ENCODE measurements at regions of chr3 and their contacts with region 1.

Region 1: GRCh38 chr3:69425261-69425660 is 39.4 kb upstream of the FRMD4B start:
- DNase-seq: peak; percentile 46
- CTCF ChIP-seq: peak; percentile 68

Region 2: GRCh38 chr3:69324362-69325025 is 100.8 kb before region 1 on chr3:
- in situ Hi-C with region 1: loop called (anchors 10 kb)
- DNase-seq: no peak
- CTCF ChIP-seq: peak; percentile 65

Region 3: DNA sequence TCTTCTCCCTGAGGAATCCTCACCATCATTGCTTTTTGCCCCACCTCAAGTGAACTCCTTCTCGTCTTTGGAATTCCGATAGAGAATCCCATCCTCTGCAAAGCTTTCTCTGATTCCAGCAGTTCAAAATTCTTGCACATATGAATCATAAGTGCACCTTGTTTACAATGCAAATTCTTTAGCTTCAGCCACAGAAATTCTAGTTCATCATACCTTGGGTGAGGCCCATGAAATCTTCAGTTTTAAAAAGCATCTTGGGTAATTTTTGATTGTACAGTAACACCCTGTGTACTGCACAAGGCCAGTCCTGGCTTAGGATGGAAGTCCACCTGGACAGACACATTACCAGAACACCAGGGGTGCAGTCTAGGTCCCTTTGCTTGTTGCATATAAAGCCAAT is 856.4 kb after region 1 on chr3:
- in situ Hi-C with region 1: no loop called
- DNase-seq: no peak
- CTCF ChIP-seq: no peak